Astrocyte of the cerebellum (primary cell): ENCODE measurements at regions of chr16 and their contacts with region 1.

Region 1: GRCh38 chr16:57795431-57795878 is 6.8 kb downstream of the KIFC3 start:
- DNase-seq: peak; percentile 40
- H3K4me3 ChIP-seq: no peak overlapping the region
- CTCF ChIP-seq: peak; percentile 61

Region 2: DNA sequence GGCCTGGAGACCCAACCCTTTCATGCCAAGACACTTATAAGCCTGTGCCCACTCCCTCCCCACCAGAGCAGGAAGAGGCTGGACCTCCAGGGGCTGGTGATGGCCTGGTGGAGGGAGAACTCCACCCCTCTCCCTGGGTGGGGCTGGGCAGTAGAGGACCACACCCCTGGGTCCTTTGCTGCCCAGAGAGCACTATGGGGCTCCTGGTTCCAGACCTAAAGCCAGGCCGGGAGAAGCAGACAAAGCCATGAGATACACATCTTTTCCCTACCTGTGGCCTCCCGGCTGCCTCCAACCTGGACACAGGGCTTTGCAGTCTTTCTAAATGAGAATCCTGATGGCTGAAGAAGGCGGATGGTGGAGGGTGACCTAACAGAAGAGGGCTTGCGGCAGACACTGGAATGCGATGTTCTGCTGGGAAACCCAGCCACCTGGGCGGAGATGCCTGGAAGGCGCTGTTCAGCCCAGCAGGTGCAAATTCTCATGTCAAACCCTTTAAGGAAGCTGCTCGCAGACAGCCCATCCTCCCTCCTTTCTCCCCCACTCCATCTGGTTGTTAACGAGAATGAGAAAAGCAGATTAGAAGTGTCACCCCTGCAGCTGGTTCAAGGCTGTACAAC is 50.7 kb after region 1 on chr16:
- in situ Hi-C with region 1: loop called (anchors 5 kb)
- DNase-seq: no peak
- H3K4me3 ChIP-seq: no peak overlapping the region
- CTCF ChIP-seq: no peak

Region 3: GRCh38 chr16:57882792-57883191 is 87.3 kb after region 1 on chr16:
- in situ Hi-C with region 1: loop called (anchors 5 kb)
- DNase-seq: no peak
- H3K4me3 ChIP-seq: no peak overlapping the region
- CTCF ChIP-seq: no peak

Region 4: GRCh38 chr16:58047557-58048348 is 252.3 kb after region 1 on chr16:
- in situ Hi-C with region 1: no loop called
- DNase-seq: no peak
- H3K4me3 ChIP-seq: no peak overlapping the region
- CTCF ChIP-seq: no peak